Activated naive CD4-positive, alpha-beta T cell treated with anti-CD3 and anti-CD28 coated beads for 36 hours (primary cell): ENCODE measurements at regions of chr3 and their contacts with region 1.

Region 1: DNA sequence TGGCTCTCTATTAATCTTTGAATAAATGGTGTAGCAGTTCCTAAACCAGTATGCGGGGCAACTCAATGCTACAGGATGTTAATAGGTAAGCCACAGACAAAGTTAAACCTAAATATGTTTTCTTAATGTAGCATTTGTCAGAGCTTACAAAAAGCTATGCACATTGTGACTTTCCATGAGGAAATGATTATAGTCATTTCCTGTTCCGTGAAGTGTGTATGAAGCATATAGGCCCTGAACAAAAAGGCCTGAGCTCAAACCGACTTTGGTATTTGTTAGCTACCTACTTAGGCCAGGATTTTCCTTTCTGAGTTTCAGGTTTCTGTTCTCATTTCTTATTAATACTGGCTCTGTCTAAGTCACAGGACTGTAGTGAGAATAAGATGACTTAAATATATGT is 14.2 kb downstream of the ZNF80 start:
- DNase-seq: peak; percentile 38
- H3K4me3 Mint-ChIP-seq: no peak overlapping the region
- H3K27ac Mint-ChIP-seq: peak overlapping the region; percentile 84
- H3K4me1 Mint-ChIP-seq: peaks cover 80% of the 10 kb centered on the region
- H3K27me3 Mint-ChIP-seq: no peaks in the 10 kb centered on the region

Region 2: DNA sequence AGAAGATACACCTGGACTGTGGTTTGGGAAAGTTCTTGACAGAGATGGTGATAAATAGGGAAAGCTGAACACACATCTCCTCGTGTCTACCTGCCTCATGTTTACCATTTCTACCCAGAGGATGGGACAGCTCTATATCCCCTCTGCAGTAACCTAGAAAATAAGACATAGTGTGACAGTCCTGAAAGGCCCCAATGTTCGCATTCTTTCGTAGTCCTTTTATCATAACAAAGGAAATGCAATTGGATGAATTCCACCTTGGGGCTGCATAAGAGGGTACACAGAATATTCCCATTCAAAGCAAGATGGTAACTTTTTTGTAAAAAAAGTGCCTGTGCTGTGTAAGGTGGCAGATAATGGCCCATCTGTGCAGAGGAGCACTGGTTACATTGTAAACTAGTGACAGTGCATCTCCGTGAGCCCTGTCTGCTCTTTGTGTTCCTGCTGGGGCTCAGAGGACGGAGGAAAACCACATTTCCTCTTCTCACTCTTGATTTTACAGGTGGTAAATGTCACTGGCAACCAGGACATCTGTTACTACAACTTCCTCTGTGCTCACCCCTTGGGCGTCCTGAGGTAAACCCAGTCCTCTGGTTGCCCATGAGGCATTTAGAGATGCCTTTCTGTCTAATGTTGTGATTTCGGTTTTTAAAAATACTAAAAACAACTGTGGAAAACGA is 616.5 kb before region 1 on chr3:
- CTCF ChIA-PET with region 1: no interaction called
- intact Hi-C with region 1: loop called (anchors 2 kb)
- DNase-seq: peak; percentile 74
- H3K4me3 Mint-ChIP-seq: peak overlapping the region; percentile 27
- H3K27ac Mint-ChIP-seq: peak overlapping the region; percentile 46
- H3K4me1 Mint-ChIP-seq: peaks cover 21% of the 10 kb centered on the region
- H3K27me3 Mint-ChIP-seq: no peaks in the 10 kb centered on the region

Region 3: DNA sequence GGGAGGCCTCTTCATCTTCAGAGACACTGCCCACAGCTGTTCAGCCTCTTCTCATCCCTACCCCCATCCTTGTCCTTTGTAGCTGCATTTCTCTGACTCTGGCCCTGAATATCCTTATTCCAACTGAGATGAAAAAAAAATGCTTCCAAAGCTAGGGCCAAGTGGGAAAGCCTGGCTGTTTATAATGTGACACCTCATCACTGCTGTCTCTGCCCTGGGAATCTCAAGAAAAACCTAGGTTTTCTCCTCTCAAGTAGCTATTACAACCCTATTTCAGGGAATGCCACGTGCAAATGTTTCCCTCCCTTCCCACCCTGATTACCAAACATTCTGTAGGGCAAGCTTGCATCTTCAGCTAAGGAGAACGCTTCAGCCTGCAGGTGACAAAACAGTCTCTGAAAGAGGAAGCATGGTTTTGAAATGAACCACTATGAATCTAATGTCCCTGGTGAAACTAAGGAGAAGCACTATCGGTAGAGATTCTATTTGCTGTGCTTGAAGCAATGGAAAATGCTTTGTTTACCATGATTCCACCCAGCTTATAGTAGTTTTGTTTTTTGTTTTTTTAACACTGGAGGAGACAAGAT is 592.1 kb before region 1 on chr3:
- CTCF ChIA-PET with region 1: no interaction called
- intact Hi-C with region 1: no loop called
- DNase-seq: no peak
- H3K4me3 Mint-ChIP-seq: no peak overlapping the region
- H3K27ac Mint-ChIP-seq: no peak overlapping the region
- H3K4me1 Mint-ChIP-seq: no peaks in the 10 kb centered on the region
- H3K27me3 Mint-ChIP-seq: no peaks in the 10 kb centered on the region

Region 4: DNA sequence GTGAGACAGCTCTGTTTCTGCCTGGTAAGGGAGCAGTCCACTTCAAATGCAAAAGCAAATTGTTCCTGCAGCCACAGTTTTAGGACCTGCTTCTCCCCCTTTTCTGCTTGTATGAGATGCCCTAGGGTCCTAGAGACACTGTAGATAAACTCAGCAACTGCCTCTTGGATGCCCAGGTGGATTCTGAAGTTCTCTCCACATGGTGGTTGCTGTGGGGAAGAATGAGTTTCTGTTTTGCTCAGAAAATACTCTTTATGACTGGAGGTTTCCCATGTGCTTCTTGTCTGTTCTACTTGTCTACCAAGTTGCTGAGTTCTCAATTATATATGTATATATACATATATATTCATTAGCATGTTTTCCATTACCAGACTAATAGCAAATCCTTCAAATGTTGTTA is 19.8 kb after region 1 on chr3:
- CTCF ChIA-PET with region 1: interaction called, 5 read pairs
- intact Hi-C with region 1: loop called (anchors 1 kb)
- DNase-seq: peak; percentile 39
- H3K4me3 Mint-ChIP-seq: no peak overlapping the region
- H3K27ac Mint-ChIP-seq: no peak overlapping the region
- H3K4me1 Mint-ChIP-seq: peaks cover 23% of the 10 kb centered on the region
- H3K27me3 Mint-ChIP-seq: no peaks in the 10 kb centered on the region

Region 5: DNA sequence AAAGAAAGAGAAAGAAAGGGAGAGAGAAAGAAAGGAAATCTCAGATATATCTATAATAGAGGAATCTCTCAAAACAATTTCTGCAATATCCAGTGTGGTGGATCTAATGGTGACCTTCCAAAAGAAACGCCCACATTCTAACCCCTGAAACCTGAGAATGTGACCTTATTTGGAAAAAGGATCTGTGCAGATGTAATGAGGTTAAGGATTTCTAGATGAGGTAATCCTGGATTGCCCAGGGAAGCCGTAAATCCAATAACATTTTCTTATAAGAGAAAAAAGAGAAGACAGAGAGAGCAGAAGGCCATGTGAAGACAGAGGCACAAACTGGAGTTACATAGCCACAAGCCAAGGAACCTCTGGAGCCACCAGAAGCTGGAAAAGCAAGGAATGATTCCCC is 616.3 kb after region 1 on chr3:
- CTCF ChIA-PET with region 1: no interaction called
- intact Hi-C with region 1: no loop called
- DNase-seq: no peak
- H3K4me3 Mint-ChIP-seq: no peak overlapping the region
- H3K27ac Mint-ChIP-seq: no peak overlapping the region
- H3K4me1 Mint-ChIP-seq: no peaks in the 10 kb centered on the region
- H3K27me3 Mint-ChIP-seq: no peaks in the 10 kb centered on the region